ENCODE measurements at regions of chr2 and their contacts with region 1.

Region 1: DNA sequence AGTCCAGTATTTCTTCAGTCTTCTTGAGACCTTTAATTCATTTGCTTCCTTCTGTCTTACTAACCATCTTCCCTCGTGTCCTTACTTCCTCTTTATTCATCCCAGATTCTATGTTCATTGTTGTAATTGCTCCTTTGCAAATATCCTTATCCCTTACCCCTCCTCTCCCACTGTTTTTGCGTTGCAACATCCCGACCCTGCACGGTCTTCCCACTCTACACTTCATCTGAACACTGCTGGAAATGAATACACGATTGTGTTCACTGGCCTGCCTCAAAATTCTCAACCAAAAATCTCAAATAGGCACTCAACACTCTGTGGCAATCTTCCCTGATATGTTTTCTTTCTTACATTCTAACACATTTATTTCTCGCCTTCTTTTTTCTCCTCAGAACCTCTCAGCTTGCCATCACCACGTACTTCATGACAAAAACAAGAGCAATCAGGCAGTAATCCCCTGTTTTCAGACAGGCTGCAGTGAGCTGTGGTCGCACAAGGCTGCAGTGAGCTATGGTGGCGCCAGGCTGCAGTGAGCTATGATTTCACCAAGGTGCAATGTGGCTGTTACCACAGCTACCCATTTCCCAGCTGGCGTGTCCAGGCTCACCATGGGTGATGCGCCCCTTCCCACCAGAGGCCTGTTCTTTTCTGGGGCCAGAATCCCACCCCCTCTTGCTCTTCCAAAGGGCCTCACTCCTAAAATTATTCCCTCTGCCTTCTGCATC is 25.7 kb downstream of the TCF23 start:
- DNase-seq: no peak
- H3K4me3 ChIP-seq: no peak overlapping the region
- H3K27ac ChIP-seq: no peak overlapping the region
- H3K4me1 ChIP-seq: peaks cover 3 to 5% of the 10 kb centered on the region in 2 experiments; a peak in 3 of 4 replicates
- H3K27me3 ChIP-seq: no peaks in the 10 kb centered on the region
- CTCF ChIP-seq: no peak
- EP300 ChIP-seq: no peak
- RAD21 ChIP-seq: no peak

Region 2: DNA sequence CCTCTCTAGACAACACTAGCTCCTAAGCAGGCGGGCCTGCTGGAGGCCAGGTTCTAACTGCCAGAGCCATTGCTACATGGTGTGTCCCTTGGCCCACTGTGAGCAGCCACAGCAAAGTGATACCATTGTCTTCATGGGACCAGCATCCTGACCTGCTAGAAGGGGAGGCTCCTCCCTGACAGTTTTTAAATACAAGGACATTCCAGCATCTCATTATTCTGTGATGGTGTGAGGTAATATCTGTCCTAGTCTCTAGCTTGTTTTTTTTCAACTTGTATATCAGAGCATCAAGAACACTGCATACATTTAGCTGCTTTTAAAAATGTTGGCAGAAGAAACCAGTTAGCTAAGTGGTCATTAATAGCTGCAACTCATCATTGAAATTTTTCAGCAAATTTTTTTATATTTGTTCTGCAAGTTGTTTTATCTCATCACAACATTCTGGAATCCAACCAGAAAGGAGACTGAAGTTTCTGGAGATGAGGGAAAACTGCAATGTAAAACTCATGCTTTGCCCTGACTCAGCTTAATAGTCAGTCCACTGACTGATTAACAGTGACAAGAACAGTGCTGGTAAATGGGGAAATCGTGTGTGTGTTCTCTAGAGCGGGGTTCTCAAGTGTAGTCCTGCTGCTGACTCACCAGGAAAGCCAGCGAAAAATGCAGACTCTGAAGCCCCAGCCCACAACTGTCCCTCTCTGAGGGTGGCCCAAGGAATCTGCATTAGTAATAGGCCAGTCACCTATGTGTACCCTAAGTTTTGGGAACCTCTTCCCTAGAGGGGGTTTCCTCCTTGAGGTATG is 186.2 kb before region 1 on chr2:
- CTCF ChIA-PET with region 1: no interaction called
- POLR2A ChIA-PET with region 1: no interaction called
- DNase-seq: no peak
- H3K4me3 ChIP-seq: no peak overlapping the region
- H3K27ac ChIP-seq: peak overlapping the region in 1 of 2 experiments; percentile 72; a peak in 2 of 4 replicates
- H3K4me1 ChIP-seq: peaks cover 0 to 17% of the 10 kb centered on the region in 2 experiments; a peak in 3 of 4 replicates
- H3K27me3 ChIP-seq: no peaks in the 10 kb centered on the region
- CTCF ChIP-seq: no peak
- EP300 ChIP-seq: peak in 1 of 2 experiments; percentile 83; a peak in 1 of 4 replicates
- RAD21 ChIP-seq: no peak

Region 3: GRCh38 chr2:27102329-27102728 is 72.1 kb before region 1 on chr2:
- CTCF ChIA-PET with region 1: interaction called, 31 read pairs
- POLR2A ChIA-PET with region 1: interaction called, 3 read pairs
- DNase-seq: no peak
- H3K4me3 ChIP-seq: no peak overlapping the region
- H3K27ac ChIP-seq: no peak overlapping the region
- H3K4me1 ChIP-seq: peaks cover 0 to under 1% of the 10 kb centered on the region in 2 experiments; a peak in 1 of 4 replicates
- H3K27me3 ChIP-seq: no peaks in the 10 kb centered on the region
- CTCF ChIP-seq: no peak
- EP300 ChIP-seq: no peak
- RAD21 ChIP-seq: no peak

Region 4: GRCh38 chr2:27145685-27146084 is 28.8 kb before region 1 on chr2:
- CTCF ChIA-PET with region 1: interaction called, 56 read pairs
- POLR2A ChIA-PET with region 1: no interaction called
- DNase-seq: no peak
- H3K4me3 ChIP-seq: no peak overlapping the region
- H3K27ac ChIP-seq: no peak overlapping the region
- H3K4me1 ChIP-seq: no peaks in the 10 kb centered on the region
- H3K27me3 ChIP-seq: peaks cover 19% of the 10 kb centered on the region
- CTCF ChIP-seq: no peak
- EP300 ChIP-seq: no peak
- RAD21 ChIP-seq: no peak

Region 5: DNA sequence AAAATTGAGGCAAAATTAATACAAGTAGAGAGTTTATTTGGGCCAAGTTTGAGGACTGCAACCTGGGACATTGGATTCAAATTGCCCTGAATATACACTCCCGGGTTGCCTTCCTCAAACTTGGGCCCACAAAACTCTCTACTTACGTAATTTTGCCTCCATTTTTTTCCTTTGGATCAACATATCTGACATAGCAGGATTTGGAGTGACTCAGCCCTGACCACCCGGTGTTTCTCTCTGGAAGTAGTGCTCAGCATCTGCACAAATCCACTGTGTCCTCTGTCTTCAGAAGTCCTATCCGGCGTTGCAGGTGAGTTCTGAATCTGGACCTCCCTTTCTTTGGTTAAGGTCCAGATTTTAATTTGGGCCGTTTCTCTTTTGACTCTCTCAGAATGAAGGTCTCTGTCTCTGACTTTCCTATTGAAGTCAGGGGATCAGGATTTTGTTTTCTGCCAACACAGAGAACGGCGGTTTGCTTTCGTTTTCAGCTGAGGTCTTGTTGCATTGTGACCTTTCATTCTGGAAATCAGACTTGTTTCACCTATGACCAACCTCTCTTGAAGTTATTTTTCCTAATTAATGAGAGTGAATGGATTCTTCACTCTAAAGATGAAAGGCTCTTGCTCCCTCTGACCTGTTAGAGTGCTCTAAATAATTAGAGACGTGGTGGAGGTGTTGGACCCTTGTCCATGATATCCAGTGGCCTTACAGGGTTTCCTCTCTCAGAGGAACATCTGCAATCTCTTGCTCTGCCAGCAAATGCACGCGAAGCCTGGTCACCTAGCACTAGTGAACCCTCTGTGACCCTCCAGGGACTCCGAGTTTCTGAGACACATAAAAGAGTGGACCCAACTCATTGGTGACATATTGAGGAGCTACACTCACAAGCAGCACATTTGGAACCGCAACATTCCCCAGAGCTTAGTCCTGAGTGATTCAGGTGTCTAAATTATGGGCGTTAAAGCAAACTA is 12.0 kb before region 1 on chr2:
- CTCF ChIA-PET with region 1: interaction called, 58 read pairs
- POLR2A ChIA-PET with region 1: no interaction called
- DNase-seq: no peak
- H3K4me3 ChIP-seq: no peak overlapping the region
- H3K27ac ChIP-seq: no peak overlapping the region
- H3K4me1 ChIP-seq: no peaks in the 10 kb centered on the region
- H3K27me3 ChIP-seq: no peaks in the 10 kb centered on the region
- CTCF ChIP-seq: no peak
- EP300 ChIP-seq: no peak
- RAD21 ChIP-seq: no peak

Region 6: DNA sequence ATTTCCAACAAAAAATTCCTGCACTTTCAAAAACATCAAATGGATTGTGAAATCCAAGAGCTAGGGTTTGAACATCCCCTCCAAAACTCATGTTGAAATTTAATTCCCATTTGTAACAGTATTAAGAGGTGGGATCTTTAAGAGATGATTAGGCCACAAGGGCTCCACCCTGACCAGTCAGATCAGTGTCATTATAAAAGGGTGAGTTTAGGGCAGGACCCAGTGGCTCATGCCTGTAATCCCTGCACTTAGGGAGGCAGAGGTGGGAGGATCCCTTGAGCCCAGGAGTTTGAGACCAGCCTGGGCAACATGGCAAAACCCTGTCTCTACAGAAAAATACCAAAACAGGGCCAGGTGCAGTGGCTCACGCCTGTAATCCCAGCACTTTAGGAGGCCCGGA is 173.2 kb after region 1 on chr2:
- CTCF ChIA-PET with region 1: no interaction called
- POLR2A ChIA-PET with region 1: no interaction called
- DNase-seq: no peak
- H3K4me3 ChIP-seq: no peak overlapping the region
- H3K27ac ChIP-seq: no peak overlapping the region
- H3K4me1 ChIP-seq: no peaks in the 10 kb centered on the region
- H3K27me3 ChIP-seq: no peaks in the 10 kb centered on the region
- CTCF ChIP-seq: no peak
- EP300 ChIP-seq: no peak
- RAD21 ChIP-seq: no peak

Region 7: GRCh38 chr2:27363933-27364332 is 189.5 kb after region 1 on chr2:
- CTCF ChIA-PET with region 1: no interaction called
- POLR2A ChIA-PET with region 1: no interaction called
- DNase-seq: no peak
- H3K4me3 ChIP-seq: no peak overlapping the region
- H3K27ac ChIP-seq: no peak overlapping the region
- H3K4me1 ChIP-seq: peaks cover 0 to 3% of the 10 kb centered on the region in 2 experiments; a peak in 2 of 4 replicates
- H3K27me3 ChIP-seq: no peaks in the 10 kb centered on the region
- CTCF ChIP-seq: no peak
- EP300 ChIP-seq: no peak
- RAD21 ChIP-seq: no peak

Measured in SK-N-SH (cell line).